Sigmoid colon (tissue), 7 donors: ENCODE measurements at regions of chr12 and their contacts with region 1.

Region 1: DNA sequence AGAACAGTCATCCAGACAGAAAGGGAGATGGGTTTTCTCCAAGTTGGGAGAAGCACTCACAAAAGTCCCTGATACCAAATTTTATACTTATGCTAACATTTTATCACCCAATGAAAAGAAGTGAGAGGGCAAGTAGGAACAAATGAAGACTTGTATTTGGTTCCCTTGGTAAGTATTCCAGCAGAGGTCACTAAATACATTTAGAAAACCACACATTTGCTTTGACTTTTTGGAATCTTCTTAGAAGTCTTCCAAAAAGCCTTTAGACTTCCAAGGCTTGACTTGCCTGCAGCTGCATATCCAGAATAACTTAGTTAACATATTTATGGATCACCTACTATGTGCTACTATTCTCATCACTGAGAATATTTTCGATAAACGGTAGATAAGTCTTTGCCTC is 3.1 kb upstream of the GYS2 start:
- DNase-seq: no peak
- H3K4me3 ChIP-seq: no peak overlapping the region
- H3K27ac ChIP-seq: no peak overlapping the region
- H3K4me1 ChIP-seq: no peaks in the 10 kb centered on the region
- H3K27me3 ChIP-seq: no peaks in the 10 kb centered on the region
- CTCF ChIP-seq: no peak
- EP300 ChIP-seq: no peak
- POLR2A ChIP-seq: no peak

Region 2: GRCh38 chr12:21683115-21683514 is 75.4 kb after region 1 on chr12:
- intact Hi-C with region 1: loop called (anchors 2 kb)
- DNase-seq: no peak
- H3K4me3 ChIP-seq: no peak overlapping the region
- H3K27ac ChIP-seq: no peak overlapping the region
- H3K4me1 ChIP-seq: peaks cover 0 to 6% (median 3%) of the 10 kb centered on the region in 4 donors
- H3K27me3 ChIP-seq: no peaks in the 10 kb centered on the region
- CTCF ChIP-seq: no peak
- EP300 ChIP-seq: no peak
- POLR2A ChIP-seq: no peak